ENCODE measurements at regions of chr16 and their contacts with region 1.

Region 1: DNA sequence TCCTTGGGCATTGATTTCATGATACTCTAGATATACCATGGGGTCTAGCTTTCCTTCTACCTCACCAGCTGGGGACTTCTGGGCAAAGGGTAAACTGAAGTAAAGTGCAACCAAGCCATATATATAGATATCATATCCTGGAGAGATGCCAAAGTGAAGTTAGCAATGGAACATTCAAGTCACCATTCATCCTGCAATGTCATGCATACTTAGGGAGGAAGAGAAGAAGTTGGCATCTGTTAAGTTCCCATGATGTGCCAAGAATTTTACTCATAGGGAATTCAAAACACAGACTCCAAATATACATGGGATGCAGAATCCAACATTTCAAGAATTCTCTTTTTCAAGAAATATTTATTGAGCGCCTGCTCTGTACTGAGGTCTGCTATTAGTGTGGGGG is 399.8 kb downstream of the HS3ST4 start:
- DNase-seq: no peak
- H3K4me3 ChIP-seq: no peak overlapping the region
- H3K27ac ChIP-seq: no peak overlapping the region
- H3K4me1 ChIP-seq: no peaks in the 10 kb centered on the region
- H3K27me3 ChIP-seq: peaks cover 0 to 4% (median 0%) of the 10 kb centered on the region in 7 donors
- CTCF ChIP-seq: no peak
- POLR2A ChIP-seq: no peak

Region 2: DNA sequence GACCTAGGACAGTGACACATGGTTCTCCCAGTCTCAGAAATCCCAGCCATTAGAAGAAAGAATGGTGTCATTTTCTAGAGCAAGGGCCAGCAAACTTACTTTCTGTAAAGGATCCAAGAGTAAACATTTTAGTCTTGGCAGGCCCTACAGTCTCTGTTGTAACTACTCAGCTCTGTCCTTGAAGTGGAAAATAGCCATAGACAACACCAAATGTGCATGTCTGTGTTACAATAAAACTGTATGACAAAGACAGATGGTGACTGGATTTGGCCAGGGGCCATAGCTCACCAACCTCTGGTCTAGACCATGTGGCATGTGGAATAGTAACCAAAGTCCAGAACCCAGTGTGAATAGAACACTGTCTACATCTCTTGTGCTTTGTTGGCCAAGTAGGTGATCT is 113.3 kb before region 1 on chr16:
- intact Hi-C with region 1: no loop called
- DNase-seq: no peak
- H3K4me3 ChIP-seq: no peak overlapping the region
- H3K27ac ChIP-seq: no peak overlapping the region
- H3K4me1 ChIP-seq: no peaks in the 10 kb centered on the region
- H3K27me3 ChIP-seq: no peaks in the 10 kb centered on the region
- CTCF ChIP-seq: no peak
- POLR2A ChIP-seq: no peak

Region 3: GRCh38 chr16:26031286-26031685 is 60.2 kb before region 1 on chr16:
- intact Hi-C with region 1: loop called (anchors 10 kb)
- DNase-seq: no peak
- H3K4me3 ChIP-seq: no peak overlapping the region
- H3K27ac ChIP-seq: no peak overlapping the region
- H3K4me1 ChIP-seq: no peaks in the 10 kb centered on the region
- H3K27me3 ChIP-seq: no peaks in the 10 kb centered on the region
- CTCF ChIP-seq: no peak
- POLR2A ChIP-seq: no peak

Region 4: DNA sequence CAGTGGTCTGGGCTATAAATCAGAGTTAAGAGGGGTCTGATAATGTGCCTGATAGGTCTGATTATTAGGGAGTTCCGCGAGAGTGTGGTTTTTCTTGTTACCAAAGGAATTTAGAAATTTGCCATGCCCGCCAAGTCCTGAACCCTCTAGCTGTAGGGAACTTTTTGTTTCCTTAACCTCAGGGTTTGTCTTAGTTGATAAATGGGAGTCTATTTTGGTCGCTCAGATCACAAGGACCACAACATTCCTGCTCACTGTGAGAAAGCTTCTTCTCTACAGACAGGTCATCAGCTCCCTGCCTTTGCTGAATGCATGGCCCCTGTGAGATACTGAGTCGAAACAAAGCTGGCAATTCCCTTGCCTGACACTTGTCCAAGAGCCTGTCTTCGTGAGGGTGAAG is 98.0 kb after region 1 on chr16:
- intact Hi-C with region 1: no loop called
- DNase-seq: no peak
- H3K4me3 ChIP-seq: no peak overlapping the region
- H3K27ac ChIP-seq: no peak overlapping the region
- H3K4me1 ChIP-seq: no peaks in the 10 kb centered on the region
- H3K27me3 ChIP-seq: peaks cover 0 to 13% (median 0%) of the 10 kb centered on the region in 7 donors
- CTCF ChIP-seq: no peak
- POLR2A ChIP-seq: no peak

Measured in spleen (tissue), 13 donors.